Ovary (tissue), 10 donors: ENCODE measurements at regions of chr3 and their contacts with region 1.

Region 1: DNA sequence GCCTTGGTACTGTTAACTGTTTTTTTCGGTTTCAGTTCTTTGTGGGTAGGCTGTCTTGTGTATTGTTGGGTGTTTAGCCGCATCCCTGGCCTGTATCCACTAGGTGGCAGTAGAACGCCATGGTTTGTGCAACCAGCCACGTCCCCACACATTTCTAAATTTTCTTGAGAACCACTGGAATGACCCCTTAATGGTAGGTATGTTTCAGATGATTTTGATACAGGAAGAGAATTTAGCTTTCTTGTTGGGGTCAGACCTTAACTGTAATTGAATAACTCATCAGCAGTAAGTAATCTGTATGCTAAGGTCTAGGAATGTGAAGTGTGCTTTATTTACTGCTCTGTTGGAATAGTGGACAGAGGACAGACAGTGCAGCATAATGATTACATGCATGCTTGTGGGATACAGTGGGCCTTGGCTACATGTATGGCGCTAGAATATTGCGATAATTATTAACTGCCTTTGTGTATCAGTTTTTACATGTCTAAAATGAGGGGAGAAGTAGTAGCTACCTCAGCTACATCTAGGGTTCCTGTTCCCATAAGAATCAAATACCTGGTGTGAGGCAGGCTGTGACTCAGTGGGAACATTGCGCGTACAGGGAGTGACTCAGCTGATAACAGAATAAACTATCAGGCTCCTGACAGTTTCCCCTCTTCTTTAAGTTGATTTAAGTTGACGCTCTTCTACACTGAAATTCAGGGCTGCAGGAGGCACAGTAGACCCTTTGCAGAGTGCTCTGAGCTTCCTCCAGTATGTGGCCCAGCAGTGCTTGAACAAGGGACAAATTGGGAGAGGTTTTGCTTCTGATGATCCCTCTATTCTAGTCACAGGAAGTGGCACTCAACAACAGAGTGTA is 25.0 kb upstream of the GPR171 start:
- DNase-seq: peak; percentile 55 to 79 (median 74)
- H3K4me3 ChIP-seq: no peak overlapping the region
- H3K27ac ChIP-seq: no peak overlapping the region
- H3K4me1 ChIP-seq: peaks cover 3% of the 10 kb centered on the region
- H3K27me3 ChIP-seq: no peaks in the 10 kb centered on the region
- CTCF ChIP-seq: peak; percentile 69 to 86 (median 81)
- EP300 ChIP-seq: no peak
- POLR2A ChIP-seq: no peak

Region 2: GRCh38 chr3:151282921-151283320 is 54.9 kb after region 1 on chr3:
- intact Hi-C with region 1: loop called (anchors 2 to 10 kb)
- DNase-seq: no peak
- H3K4me3 ChIP-seq: no peak overlapping the region
- H3K27ac ChIP-seq: no peak overlapping the region
- H3K4me1 ChIP-seq: no peaks in the 10 kb centered on the region
- H3K27me3 ChIP-seq: no peaks in the 10 kb centered on the region
- CTCF ChIP-seq: peak; percentile 34 to 69 (median 44)
- EP300 ChIP-seq: no peak
- POLR2A ChIP-seq: no peak

Region 3: DNA sequence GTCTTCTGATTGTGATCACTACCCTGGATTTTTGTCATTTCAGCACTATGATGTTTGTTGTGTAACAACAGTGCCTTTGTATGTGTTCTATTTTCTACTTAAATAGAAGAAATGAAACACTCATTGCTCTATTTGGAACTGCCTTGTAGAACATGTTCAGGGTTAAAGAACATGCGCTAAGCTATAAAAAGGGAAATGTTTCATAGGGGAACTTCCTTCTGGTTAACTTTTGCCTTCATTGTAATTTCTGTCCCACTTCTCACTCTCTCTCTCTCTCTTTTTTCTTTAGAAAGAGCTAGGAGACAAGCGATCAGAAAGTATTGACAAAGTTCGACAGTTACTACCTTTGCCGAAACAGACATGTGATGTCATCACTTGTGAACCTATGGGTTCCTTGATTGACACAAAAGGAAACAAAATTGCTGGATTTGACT is 156.7 kb after region 1 on chr3 and contains the start of gene P2RY12:
- intact Hi-C with region 1: no loop called
- DNase-seq: no peak
- H3K4me3 ChIP-seq: peak within 1 kb of the TSS; percentile 25
- H3K27ac ChIP-seq: no peak within 1 kb of the TSS
- H3K4me1 ChIP-seq: no peaks in the 10 kb centered on the region
- H3K27me3 ChIP-seq: no peaks in the 10 kb centered on the region
- CTCF ChIP-seq: no peak
- EP300 ChIP-seq: no peak
- POLR2A ChIP-seq: no peak
- total RNA-seq, gene P2RY12: 0.22 to 1.7 (median 0.69) TPM